ENCODE measurements at regions of chr6 and their contacts with region 1.

Region 1: DNA sequence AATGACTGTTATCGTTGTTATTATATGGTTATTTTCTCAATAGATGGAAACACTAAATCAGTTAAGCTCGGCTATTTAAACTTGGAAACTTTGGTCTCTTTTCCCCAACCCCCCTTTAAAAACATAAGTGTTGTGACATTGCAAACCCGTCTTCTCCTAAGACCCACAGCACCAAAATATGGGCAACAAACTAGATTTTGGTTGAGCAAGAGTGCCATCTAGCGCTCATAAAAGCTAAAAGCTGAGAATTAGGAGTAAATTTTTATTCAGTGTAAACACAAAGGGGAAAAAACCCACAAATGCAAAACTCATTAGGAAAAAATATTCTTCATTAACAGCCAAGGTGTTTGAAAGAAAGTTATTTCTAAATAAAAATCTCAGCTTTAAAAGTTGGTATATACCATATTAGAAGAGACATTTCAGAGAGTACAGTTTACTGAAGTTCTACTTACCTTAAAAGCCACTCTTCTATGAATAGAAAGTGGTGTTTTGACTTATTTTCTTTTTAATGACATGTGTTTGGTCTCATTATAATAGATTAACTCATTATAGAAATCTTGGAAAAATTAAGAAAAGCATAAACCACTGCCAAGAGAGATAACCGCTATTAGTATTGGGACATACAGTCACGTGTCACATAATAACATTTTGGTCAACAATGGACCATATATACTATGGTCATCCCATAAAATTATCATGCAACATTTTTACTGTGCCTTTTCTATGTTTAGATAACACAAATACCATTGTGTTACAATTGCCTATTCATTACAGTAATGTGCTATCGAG is 21.1 kb downstream of the SESN1 start:
- DNase-seq: peak; percentile 55
- H3K4me3 ChIP-seq: peak overlapping the region in 1 of 2 experiments; percentile 25; a peak in 1 of 4 replicates
- H3K27ac ChIP-seq: no peak overlapping the region
- H3K4me1 ChIP-seq: peaks cover 0 to 22% of the 10 kb centered on the region in 2 experiments; a peak in 2 of 4 replicates
- H3K27me3 ChIP-seq: no peaks in the 10 kb centered on the region
- CTCF ChIP-seq: peak; percentile 76
- EP300 ChIP-seq: no peak
- RAD21 ChIP-seq: peak; percentile 93

Region 2: GRCh38 chr6:108558372-108559096 is 515.0 kb before region 1 on chr6:
- CTCF ChIA-PET with region 1: interaction called, 17 read pairs
- POLR2A ChIA-PET with region 1: interaction called, 3 read pairs
- DNase-seq: peak; percentile 89
- H3K4me3 ChIP-seq: peak overlapping the region; percentile 91 to 96
- H3K27ac ChIP-seq: peak overlapping the region; percentile 97 to 98
- H3K4me1 ChIP-seq: peaks cover 0 to 20% of the 10 kb centered on the region in 2 experiments; a peak in 2 of 4 replicates
- H3K27me3 ChIP-seq: no peaks in the 10 kb centered on the region
- CTCF ChIP-seq: no peak
- EP300 ChIP-seq: no peak
- RAD21 ChIP-seq: peak; percentile 29; the same call in 1 of the 2 replicates

Region 3: GRCh38 chr6:108896111-108896661 is 177.4 kb before region 1 on chr6:
- CTCF ChIA-PET with region 1: interaction called, 20 read pairs
- POLR2A ChIA-PET with region 1: no interaction called
- DNase-seq: no peak
- H3K4me3 ChIP-seq: no peak overlapping the region
- H3K27ac ChIP-seq: peak overlapping the region; percentile 72 to 76; a peak in 3 of 4 replicates
- H3K4me1 ChIP-seq: peaks cover 16 to 22% of the 10 kb centered on the region in 2 experiments
- H3K27me3 ChIP-seq: no peaks in the 10 kb centered on the region
- CTCF ChIP-seq: no peak
- EP300 ChIP-seq: no peak
- RAD21 ChIP-seq: no peak

Region 4: GRCh38 chr6:109036574-109037294 is 36.8 kb before region 1 on chr6:
- CTCF ChIA-PET with region 1: interaction called, 12 read pairs
- POLR2A ChIA-PET with region 1: no interaction called
- DNase-seq: no peak
- H3K4me3 ChIP-seq: no peak overlapping the region
- H3K27ac ChIP-seq: no peak overlapping the region
- H3K4me1 ChIP-seq: peaks cover 0 to 9% of the 10 kb centered on the region in 2 experiments; a peak in 1 of 4 replicates
- H3K27me3 ChIP-seq: no peaks in the 10 kb centered on the region
- CTCF ChIP-seq: no peak
- EP300 ChIP-seq: no peak
- RAD21 ChIP-seq: no peak

Region 5: DNA sequence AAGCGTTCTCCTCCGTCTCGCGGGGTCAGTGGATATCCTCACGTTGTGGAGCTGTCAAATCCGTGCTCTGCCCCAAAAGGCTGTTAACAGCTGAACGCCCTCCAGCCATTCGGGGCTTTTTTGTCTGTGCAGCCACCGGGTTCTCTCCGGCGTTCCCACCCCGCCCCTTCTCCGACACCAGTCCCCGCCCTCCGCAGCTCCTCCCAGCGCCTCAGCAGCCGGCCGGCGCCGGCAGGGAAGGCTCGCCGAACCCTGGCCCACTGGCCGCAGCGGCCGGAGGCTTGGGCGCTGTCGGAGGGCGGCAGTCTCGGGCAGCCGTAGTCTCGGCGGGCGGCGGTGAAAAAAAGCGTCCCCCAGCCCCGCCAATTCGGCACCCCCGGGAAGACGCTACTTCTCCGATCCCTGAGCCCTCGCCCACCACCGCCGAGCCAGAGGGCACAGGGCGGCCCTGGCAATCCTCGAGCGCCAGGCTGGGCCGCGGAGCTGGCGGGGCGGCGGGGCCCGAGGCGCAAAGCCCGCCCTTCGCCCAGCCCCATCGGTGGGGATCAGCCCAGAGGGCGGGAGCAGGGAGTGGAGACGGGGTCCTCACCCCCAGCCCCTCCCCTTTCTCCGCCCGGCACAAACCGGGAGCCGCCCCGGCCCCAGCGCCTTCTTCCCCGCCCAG is 21.0 kb after region 1 on chr6 and contains the start of gene SESN1:
- CTCF ChIA-PET with region 1: interaction called, 10 read pairs
- POLR2A ChIA-PET with region 1: interaction called, 3 read pairs
- DNase-seq: peak; percentile 97
- H3K4me3 ChIP-seq: peak within 1 kb of the TSS; percentile 96
- H3K27ac ChIP-seq: peak within 1 kb of the TSS; percentile 99
- H3K4me1 ChIP-seq: peaks cover 5 to 15% of the 10 kb centered on the region in 2 experiments; a peak in 2 of 4 replicates
- H3K27me3 ChIP-seq: no peaks in the 10 kb centered on the region
- CTCF ChIP-seq: no peak
- EP300 ChIP-seq: peak in 1 of 2 experiments; percentile 39; a peak in 2 of 4 replicates
- RAD21 ChIP-seq: no peak
- polyA plus RNA-seq, gene SESN1: 13.1 and 18.8 TPM in 2 replicates

Region 6: DNA sequence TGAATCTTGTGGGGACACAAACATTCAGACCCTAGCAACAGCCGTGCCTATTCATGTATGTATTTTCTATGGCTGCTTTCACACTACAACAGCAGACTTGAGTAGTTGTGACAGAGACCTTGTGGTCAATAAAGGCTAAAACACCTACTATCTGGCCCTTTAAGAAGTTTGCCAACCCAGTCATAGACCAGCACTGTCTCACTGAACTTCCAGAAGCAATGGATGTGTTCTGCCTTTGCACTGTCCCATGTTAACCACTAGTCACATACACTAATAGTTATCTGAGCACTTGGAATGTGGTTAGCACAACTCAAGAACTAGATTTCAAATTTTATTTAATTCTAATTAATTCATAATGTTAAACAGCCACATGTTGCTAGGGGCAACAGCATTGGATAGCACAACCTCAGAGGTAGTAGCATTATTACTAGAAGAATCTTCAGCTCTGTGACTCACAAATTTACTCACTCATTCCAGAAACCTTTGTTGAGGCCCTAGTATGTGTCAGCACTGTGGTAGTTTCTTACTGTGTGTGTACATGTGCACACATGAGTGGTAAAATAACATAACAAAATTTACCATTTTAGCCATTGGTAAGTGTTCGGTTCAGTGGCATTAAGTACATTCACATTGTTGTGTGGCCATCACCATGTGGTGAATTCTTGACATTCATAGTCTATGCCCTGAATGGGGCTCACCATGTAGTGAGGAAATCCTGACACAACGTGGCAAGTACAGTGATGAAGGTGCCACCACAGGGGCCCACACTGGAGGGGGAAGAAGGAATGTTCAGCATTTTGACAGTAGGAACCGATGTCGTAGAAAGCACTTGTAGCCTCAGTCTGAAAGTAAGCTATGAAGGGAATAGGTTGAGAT is 129.1 kb after region 1 on chr6:
- CTCF ChIA-PET with region 1: no interaction called
- POLR2A ChIA-PET with region 1: no interaction called
- DNase-seq: no peak
- H3K4me3 ChIP-seq: no peak overlapping the region
- H3K27ac ChIP-seq: no peak overlapping the region
- H3K4me1 ChIP-seq: no peaks in the 10 kb centered on the region
- H3K27me3 ChIP-seq: no peaks in the 10 kb centered on the region; the same call in 1 of the 2 replicates
- CTCF ChIP-seq: no peak
- EP300 ChIP-seq: no peak
- RAD21 ChIP-seq: no peak